ENCODE measurements at regions of chr2 and their contacts with region 1.

Region 1: DNA sequence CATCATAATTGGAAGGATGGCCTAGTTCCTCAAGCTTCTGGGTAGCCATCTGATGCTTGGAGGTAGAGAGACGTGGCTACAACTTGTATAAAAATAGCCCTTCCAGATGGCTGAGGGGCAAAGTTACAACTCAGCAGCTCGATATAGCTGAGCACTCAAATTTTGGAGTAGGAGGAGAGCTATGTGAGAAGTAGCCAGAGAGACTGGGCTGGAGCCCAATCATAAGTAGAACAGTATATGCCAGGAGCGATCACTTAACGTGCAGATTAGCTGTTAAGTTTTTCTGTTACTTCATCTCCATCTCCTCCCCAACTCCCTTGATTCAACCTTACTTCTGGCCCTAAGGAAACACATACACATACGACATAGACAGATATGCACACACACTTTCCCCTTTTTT is 28.8 kb downstream of the CNRIP1 start:
- DNase-seq: no peak
- H3K4me3 ChIP-seq: no peak overlapping the region
- H3K27me3 ChIP-seq: no peaks in the 10 kb centered on the region
- CTCF ChIP-seq: no peak

Region 2: GRCh38 chr2:68027959-68028358 is 262.9 kb before region 1 on chr2:
- CTCF ChIA-PET with region 1: no interaction called
- POLR2A ChIA-PET with region 1: no interaction called
- DNase-seq: peak; percentile 69
- H3K4me3 ChIP-seq: no peak overlapping the region
- H3K27me3 ChIP-seq: no peaks in the 10 kb centered on the region
- CTCF ChIP-seq: no peak

Region 3: DNA sequence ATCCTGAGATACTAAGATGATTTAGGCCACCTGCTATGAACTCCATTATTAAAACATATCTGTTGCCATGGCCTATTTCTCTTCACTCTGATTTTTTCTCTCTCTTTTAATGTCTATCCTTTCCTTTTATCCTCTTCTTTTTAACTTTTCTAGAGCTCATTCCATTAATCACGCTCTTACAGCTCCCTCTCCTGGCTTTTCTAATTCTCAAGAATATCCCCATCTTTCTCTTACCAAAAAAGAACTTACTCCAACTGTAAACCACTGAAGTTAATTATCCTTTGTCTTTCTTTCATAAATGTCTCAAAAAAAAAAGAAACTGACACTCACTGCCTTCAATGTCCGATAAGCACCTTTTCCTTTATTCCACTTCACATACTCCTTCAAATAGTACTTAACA is 46.4 kb before region 1 on chr2:
- CTCF ChIA-PET with region 1: no interaction called
- POLR2A ChIA-PET with region 1: no interaction called
- DNase-seq: no peak
- H3K4me3 ChIP-seq: no peak overlapping the region
- H3K27me3 ChIP-seq: no peaks in the 10 kb centered on the region
- CTCF ChIP-seq: peak; percentile 23; the same call in 1 of the 2 replicates

Region 4: DNA sequence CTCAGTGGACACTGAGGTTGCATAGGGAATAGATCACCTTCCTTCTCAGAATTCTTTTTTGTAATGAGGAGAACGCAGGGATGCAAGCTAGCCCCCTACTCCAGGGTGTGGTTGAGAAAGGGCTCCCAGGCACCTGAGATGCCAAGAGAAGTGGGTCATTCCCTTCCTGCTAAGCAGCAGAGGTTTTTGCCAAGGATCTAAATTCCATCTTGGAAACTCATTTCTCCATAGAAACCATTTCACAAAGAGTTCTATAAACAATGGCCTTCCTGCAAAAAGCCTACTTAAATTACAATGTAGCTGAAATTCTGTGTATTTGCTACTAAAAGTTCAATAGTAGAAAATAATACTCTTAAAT is 34.8 kb before region 1 on chr2:
- CTCF ChIA-PET with region 1: no interaction called
- POLR2A ChIA-PET with region 1: no interaction called
- DNase-seq: no peak
- H3K4me3 ChIP-seq: no peak overlapping the region
- H3K27me3 ChIP-seq: no peaks in the 10 kb centered on the region
- CTCF ChIP-seq: no peak

Region 5: DNA sequence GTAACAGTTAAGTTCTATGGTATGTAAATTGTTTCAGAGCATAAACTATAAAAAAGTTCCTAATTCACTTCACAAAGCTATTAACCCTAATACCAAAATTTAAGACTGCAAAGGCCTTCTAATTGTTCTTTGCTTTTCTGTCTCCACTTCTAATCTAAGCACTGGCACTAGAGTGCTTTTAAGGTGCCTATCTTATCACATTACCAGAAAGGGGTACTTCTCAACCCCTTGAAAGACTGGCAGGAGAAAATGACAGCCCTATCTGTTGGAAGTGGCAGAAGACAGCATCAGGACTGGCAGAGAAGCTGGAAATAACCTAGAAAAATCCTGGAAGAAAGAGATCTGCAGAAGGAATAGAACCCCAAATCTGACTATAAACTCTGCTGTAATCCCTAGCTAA is 18.5 kb after region 1 on chr2:
- CTCF ChIA-PET with region 1: interaction called, 20 read pairs
- POLR2A ChIA-PET with region 1: no interaction called
- DNase-seq: no peak
- H3K4me3 ChIP-seq: no peak overlapping the region
- H3K27me3 ChIP-seq: no peaks in the 10 kb centered on the region
- CTCF ChIP-seq: no peak

Measured in BJ (cell line).